ENCODE measurements at regions of chr17 and their contacts with region 1.

Region 1: DNA sequence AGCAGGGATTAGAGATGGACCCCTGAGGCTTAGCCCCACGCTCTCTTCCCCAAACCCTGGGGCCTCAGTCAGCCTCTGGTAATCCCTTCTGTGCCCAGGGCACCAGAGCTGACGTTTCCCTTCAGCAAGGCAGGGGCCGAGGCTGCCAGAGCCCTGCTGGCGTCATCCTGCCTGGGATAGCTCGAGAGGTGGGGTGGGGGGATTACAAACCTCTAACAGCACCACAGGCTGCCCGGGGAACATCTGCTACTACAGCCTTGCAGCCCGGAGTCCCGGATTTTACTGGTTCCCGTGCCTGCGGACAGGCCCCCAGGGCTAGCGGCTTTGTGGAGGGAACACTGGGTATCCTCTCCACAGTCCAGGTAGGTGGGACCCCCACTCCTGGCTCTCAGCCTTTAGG is at the start of gene AANAT:
- DNase-seq: no peak
- ATAC-seq: no peak
- H3K4me3 ChIP-seq: no peak within 1 kb of the TSS
- H3K4me3 Mint-ChIP-seq: no peak within 1 kb of the TSS
- H3K27ac ChIP-seq: no peak within 1 kb of the TSS
- H3K27ac Mint-ChIP-seq: peak within 1 kb of the TSS in 1 of 9 donors; percentile 63
- H3K4me1 ChIP-seq: no peaks in the 10 kb centered on the region
- H3K4me1 Mint-ChIP-seq: peaks cover 0 to 9% (median 4%) of the 10 kb centered on the region in 7 donors
- H3K27me3 ChIP-seq: no peaks in the 10 kb centered on the region
- H3K27me3 Mint-ChIP-seq: peaks cover 0 to 4% (median 0%) of the 10 kb centered on the region in 5 donors
- total RNA-seq, gene AANAT: not detected

Region 2: DNA sequence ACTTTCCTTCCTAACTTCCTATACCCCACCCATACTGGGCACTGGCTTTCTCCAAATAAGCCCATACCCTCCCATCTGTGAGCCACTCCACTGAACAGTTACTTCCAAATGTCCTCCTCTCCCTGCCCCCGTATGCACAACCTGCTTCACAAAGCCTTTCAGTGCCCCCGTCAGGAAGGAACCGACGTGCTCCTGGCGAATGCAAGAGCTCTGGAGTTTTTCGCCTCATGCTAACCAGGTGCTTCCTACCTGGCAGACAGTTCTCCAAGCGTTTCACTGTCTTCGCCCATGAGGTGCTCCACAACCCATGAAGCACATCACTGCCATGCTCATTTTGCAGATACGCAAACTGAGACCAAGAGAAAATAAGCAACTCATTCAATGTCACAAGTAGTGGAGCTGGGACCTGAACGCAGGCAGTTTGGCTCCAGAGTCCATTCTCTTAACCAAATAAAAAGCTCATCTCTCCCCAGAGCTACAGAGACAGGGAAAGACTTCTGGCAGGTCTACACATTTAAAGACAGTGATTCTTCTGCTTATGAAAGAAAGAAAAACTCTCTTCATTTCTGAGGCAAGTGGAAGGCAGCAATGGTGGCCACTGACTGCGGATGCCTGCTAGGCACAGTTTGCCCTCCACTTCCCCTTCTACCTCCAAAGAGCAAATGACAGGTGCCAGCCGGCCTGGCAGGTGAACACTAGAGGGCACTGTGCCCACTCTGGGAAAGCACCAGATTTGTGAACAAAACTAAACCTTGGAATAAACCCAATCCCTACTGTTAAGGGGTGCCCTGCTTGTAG is 59.1 kb before region 1 on chr17:
- CTCF ChIA-PET with region 1: interaction called, 4 read pairs
- POLR2A ChIA-PET with region 1: no interaction called
- intact Hi-C with region 1: loop called in 1 of 2 experiments (anchors 1 kb)
- DNase-seq: peak; percentile 48 to 72 (median 65)
- ATAC-seq: peak; percentile 89
- H3K4me3 ChIP-seq: no peak overlapping the region
- H3K4me3 Mint-ChIP-seq: no peak overlapping the region
- H3K27ac ChIP-seq: no peak overlapping the region
- H3K27ac Mint-ChIP-seq: peak overlapping the region in 6 of 9 donors; percentile 25 to 75 (median 61)
- H3K4me1 ChIP-seq: no peaks in the 10 kb centered on the region
- H3K4me1 Mint-ChIP-seq: peaks cover 9 to 14% (median 11%) of the 10 kb centered on the region in 7 donors
- H3K27me3 ChIP-seq: no peaks in the 10 kb centered on the region
- H3K27me3 Mint-ChIP-seq: no peaks in the 10 kb centered on the region

Region 3: DNA sequence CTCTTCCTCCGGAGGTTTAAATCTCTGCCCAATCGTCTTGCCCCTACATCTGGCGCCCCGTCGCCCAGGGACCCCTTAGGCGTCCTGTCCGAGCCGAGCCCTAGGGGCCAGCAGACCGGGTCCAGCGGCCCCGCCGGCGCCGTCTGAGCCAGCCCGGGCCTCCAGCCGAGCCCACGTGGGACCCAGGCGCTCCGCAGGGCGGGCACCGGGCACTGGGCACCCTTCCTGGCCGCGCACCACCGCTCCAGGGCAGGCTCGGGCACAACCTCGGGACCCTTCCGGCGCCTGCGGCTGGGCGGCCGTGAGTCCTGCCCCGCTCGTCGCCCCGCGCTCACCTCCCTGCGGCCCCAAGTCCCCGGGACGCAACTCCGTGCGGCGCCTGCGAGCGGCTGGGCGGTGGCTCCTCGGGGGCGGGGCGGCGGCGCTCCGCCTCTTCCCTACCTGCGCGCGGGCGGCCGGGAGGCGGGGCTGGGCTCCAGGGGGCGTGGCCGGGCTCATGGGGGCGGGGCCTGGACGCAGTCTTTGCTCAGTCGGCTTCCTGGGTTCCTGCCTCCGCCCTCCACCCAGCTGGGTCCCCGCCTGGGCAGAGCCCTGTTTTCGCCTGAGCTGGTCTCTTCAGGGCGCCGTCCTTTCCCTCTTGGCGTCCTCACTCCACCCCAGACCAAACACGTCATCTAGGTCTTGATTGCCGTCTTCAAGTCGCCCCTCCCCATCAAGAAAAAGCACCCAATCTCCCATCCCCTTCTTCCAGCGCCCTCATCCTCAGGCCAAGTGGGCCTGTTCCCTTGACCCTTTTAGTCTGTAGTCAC is 33.9 kb after region 1 on chr17 and contains the start of gene RHBDF2:
- CTCF ChIA-PET with region 1: interaction called, 45 read pairs
- POLR2A ChIA-PET with region 1: interaction called, 5 read pairs
- intact Hi-C with region 1: loop called (anchors 1 kb)
- DNase-seq: peak; percentile 90 to 100 (median 95)
- ATAC-seq: peak; percentile 99
- H3K4me3 ChIP-seq: peak within 1 kb of the TSS; percentile 62
- H3K4me3 Mint-ChIP-seq: peak within 1 kb of the TSS; percentile 82 to 91 (median 86)
- H3K27ac ChIP-seq: peak within 1 kb of the TSS; percentile 73
- H3K27ac Mint-ChIP-seq: peak within 1 kb of the TSS; percentile 95 to 99 (median 97)
- H3K4me1 ChIP-seq: peaks cover 22 to 44% of the 10 kb centered on the region in 2 donors
- H3K4me1 Mint-ChIP-seq: peaks cover 17 to 61% (median 35%) of the 10 kb centered on the region in 7 donors
- H3K27me3 ChIP-seq: no peaks in the 10 kb centered on the region
- H3K27me3 Mint-ChIP-seq: no peaks in the 10 kb centered on the region
- total RNA-seq, gene RHBDF2: 31.1 to 119 (median 35.4) TPM

Region 4: GRCh38 chr17:76547184-76547641 is 79.8 kb after region 1 on chr17:
- CTCF ChIA-PET with region 1: interaction called, 14 read pairs
- POLR2A ChIA-PET with region 1: no interaction called
- intact Hi-C with region 1: loop called (anchors 1 kb)
- DNase-seq: peak in 8 of 9 donors; percentile 47 to 71 (median 64)
- ATAC-seq: peak; percentile 92
- H3K4me3 ChIP-seq: no peak overlapping the region
- H3K4me3 Mint-ChIP-seq: no peak overlapping the region
- H3K27ac ChIP-seq: no peak overlapping the region
- H3K27ac Mint-ChIP-seq: no peak overlapping the region
- H3K4me1 ChIP-seq: no peaks in the 10 kb centered on the region
- H3K4me1 Mint-ChIP-seq: peaks cover 0 to 14% (median 4%) of the 10 kb centered on the region in 7 donors
- H3K27me3 ChIP-seq: no peaks in the 10 kb centered on the region
- H3K27me3 Mint-ChIP-seq: peaks cover 3 to 18% (median 7%) of the 10 kb centered on the region in 5 donors

Region 5: DNA sequence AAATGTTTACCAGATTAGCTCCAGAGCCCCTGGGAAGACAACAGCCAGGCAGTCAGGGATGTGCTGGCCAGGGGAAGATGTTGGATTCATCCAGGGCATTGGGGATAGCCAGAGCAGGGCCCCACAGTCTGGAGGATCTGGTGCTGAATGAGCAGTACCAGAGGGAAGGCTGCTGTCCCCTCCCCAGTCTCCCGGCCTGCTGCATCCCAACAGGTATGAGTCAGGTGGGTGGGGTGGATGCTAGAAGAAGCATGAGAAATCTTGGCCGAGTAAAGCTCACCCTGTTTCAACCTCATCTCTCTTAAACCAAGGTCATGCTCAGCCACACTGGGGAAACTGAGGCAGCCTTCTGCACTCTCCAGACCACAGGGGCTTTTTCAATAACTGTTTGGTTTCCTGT is 601.5 kb after region 1 on chr17:
- CTCF ChIA-PET with region 1: no interaction called
- POLR2A ChIA-PET with region 1: no interaction called
- intact Hi-C with region 1: loop called in 1 of 2 experiments (anchors 5 kb)
- DNase-seq: no peak
- ATAC-seq: no peak
- H3K4me3 ChIP-seq: no peak overlapping the region
- H3K4me3 Mint-ChIP-seq: no peak overlapping the region
- H3K27ac ChIP-seq: no peak overlapping the region
- H3K27ac Mint-ChIP-seq: no peak overlapping the region
- H3K4me1 ChIP-seq: no peaks in the 10 kb centered on the region
- H3K4me1 Mint-ChIP-seq: peaks cover 0 to 6% (median 0%) of the 10 kb centered on the region in 7 donors
- H3K27me3 ChIP-seq: no peaks in the 10 kb centered on the region
- H3K27me3 Mint-ChIP-seq: peaks cover 18 to 42% (median 29%) of the 10 kb centered on the region in 5 donors